Activated naive CD4-positive, alpha-beta T cell treated with anti-CD3 and anti-CD28 coated beads for 36 hours (primary cell): ENCODE measurements at regions of chr1 and their contacts with region 1.

Region 1: DNA sequence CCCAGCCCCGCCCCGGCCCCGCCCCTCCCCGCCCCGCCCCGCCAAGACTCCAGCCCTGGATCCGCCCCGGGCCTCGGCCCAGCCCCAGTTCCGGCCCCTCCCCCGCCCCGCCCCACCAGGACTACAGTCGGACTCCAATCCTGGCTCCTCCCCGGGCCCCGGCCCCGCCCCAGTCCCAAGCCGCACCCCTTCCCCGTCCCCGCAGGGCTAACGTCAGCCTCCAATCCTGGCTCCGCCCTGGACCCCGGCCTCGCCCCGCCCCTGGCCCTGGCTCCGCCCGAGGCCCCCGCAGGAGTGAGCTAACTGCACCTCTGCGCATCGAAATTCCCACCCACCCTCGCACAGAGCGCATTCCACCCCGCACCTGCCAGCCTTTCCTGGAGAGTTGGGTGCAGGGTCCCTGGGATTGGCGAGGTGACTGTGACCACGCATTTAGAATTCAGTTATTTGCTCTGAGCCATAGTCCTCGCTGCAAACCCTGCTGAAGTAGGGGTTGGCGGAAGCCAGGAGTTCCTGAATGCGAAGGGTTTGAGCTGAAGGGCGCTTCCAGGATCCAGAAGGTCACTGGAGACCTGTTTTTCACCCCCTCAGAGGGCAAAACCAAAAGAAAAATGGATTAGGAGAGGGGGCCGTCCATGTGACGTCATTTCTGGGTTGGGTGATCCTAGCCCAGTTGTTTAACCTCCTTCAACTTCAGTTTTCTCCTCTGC is 588 bp upstream of the IGSF8 start:
- DNase-seq: peak; percentile 99
- H3K4me3 Mint-ChIP-seq: peak overlapping the region; percentile 75
- H3K27ac Mint-ChIP-seq: peak overlapping the region; percentile 81
- H3K4me1 Mint-ChIP-seq: peaks cover 50% of the 10 kb centered on the region
- H3K27me3 Mint-ChIP-seq: no peaks in the 10 kb centered on the region

Region 2: DNA sequence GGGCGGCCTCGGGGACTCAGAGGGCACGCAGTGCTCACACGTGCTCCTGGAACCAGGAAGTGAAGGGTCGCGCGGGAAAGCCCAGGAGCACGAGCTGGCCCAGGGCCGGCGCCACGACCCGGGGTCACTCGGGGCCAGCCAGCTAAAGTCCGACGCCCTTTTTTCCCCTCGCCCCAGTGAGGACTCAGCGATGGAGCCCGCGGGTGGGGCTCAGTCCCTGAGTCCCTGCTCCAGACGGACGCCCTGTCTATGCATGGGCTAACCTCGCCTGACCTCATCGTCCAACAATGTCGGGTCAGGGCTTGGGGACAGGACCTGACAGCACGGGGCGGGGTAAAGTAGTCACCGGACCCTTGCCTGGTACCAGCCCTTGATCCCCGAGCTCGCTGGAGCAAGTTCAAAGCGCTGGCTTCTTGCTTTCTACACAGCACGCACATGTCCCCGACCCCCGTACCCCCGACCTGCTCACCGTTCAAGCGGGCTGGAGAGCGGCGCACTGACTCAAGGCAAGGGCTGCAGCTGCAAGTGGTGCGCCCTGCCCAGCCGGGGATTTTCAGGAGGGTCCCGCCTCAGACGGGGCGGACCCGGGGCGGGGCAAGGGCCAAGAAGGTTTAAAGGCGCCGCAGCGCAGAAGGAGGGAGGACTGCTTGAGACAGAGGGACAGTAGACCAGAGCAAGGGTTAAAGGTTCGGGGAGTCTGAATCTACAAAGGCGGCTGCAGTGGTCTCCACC is 173.9 kb before region 1 on chr1 and contains the start of gene TAGLN2:
- CTCF ChIA-PET with region 1: no interaction called
- intact Hi-C with region 1: loop called (anchors 1 kb)
- DNase-seq: peak; percentile 89
- H3K4me3 Mint-ChIP-seq: peak within 1 kb of the TSS; percentile 91
- H3K27ac Mint-ChIP-seq: peak within 1 kb of the TSS; percentile 93
- H3K4me1 Mint-ChIP-seq: peaks cover 42% of the 10 kb centered on the region
- H3K27me3 Mint-ChIP-seq: no peaks in the 10 kb centered on the region
- total RNA-seq, gene TAGLN2: 453 to 454 TPM

Region 3: DNA sequence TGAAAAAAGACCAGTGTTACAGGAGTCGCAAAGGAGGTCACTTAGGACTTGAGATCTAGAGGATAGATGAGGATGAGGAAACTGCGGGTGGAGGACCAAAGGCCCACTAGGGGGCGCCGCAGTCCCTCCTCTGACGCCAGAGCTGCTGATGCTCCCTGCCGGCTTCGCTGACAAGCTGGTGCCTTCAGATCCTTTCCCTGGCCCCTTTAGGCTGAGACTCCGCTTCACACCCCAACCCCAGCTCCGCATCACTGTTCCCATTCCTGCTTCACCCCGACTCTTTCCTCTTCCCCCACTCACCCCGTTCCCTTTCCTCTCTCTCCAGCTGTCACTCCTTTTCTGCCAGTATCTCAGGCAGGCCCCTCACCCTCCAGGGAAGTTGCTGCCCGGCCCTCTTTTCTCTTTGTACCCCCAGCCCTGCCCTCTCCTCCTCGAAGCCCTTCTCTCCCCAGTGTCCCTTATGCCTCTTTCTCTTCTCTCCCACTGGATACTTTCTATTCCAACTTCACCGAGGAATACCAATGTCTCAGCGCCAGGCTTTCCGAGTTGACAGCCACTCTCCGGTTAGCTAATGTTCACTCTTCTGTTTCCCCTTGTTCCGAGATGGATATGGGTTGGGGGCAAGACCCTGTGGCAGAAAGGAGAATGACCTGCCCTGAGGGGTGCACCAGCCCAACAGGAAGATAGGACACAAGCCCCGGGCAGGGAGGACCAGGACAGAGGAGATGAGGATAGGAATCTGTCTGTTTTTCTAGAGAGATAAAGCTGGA is 13.1 kb before region 1 on chr1:
- CTCF ChIA-PET with region 1: interaction called, 88 read pairs
- intact Hi-C with region 1: loop called (anchors 1 kb)
- DNase-seq: peak; percentile 88
- H3K4me3 Mint-ChIP-seq: no peak overlapping the region
- H3K27ac Mint-ChIP-seq: no peak overlapping the region
- H3K4me1 Mint-ChIP-seq: peaks cover 5% of the 10 kb centered on the region
- H3K27me3 Mint-ChIP-seq: peaks cover 17% of the 10 kb centered on the region

Region 4: GRCh38 chr1:160205242-160206035 is 106.4 kb after region 1 on chr1 and contains the start of gene PEA15:
- CTCF ChIA-PET with region 1: interaction called, 17 read pairs
- intact Hi-C with region 1: loop called (anchors 1 kb)
- DNase-seq: peak; percentile 79
- H3K4me3 Mint-ChIP-seq: peak within 1 kb of the TSS; percentile 85
- H3K27ac Mint-ChIP-seq: peak within 1 kb of the TSS; percentile 87
- H3K4me1 Mint-ChIP-seq: peaks cover 46% of the 10 kb centered on the region
- H3K27me3 Mint-ChIP-seq: no peaks in the 10 kb centered on the region
- total RNA-seq, gene PEA15: 34.3 to 42.0 TPM

Region 5: DNA sequence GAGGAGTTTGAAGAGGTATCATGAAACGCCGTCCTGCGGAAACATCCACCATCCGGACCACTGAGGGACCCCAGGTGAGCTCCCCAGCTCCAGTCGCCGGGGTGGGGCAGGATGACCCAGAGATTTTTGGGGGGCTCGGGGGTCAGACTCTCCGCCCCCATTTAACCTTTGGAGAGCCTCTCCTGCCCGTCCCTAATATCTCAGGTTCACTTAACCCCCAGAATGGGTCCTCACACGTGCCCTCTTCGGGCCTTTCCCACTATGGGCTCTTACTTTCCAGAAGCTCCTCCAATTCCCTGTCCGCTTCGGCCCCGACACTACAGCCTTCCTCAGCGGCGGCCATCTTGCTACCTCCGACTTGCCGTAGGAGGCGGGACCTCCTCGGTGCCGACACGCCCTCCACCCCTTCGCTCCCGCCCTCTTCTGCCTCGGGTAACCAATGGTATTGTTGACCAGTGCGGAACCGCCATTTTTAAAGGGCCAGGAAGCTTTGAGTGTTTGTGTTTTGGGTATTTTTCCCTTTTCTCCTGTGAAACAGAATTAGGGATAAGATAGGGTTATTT is 185.9 kb after region 1 on chr1 and contains the start of gene PEX19:
- CTCF ChIA-PET with region 1: interaction called, 87 read pairs
- intact Hi-C with region 1: loop called (anchors 1 kb)
- DNase-seq: peak; percentile 97
- H3K4me3 Mint-ChIP-seq: peak within 1 kb of the TSS; percentile 98
- H3K27ac Mint-ChIP-seq: peak within 1 kb of the TSS; percentile 87
- H3K4me1 Mint-ChIP-seq: peaks cover 18% of the 10 kb centered on the region
- H3K27me3 Mint-ChIP-seq: no peaks in the 10 kb centered on the region
- total RNA-seq, gene PEX19: 58.3 to 65.4 TPM

Region 6: DNA sequence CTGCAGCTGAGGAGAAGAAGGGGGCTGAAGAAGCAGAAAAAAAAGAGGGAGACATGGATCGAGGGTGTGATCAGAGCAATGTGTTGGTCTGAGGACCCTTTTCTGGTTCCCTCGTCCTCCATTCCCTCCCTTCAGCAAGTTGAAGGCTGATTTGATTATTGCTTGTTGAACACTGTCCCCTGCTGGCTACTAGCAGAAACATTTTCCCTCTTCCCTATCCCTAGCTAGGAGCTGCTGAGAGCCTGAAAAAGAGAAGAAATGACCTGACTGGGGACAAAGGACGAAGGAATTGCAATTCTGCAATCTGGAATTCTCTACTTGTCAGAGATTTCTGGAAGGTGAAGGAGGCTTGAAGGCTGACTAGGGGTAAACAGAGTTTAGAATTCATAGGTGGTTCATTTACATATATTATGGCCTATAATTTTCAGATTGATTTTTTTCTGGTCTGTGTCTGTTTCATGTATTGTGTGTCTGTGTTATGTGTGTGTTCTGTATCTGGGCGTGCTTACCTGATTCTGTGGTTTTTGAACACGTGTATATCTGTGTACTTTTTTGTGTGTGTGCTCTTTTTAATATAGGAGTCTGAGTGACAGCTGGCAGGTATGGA is 277.6 kb after region 1 on chr1:
- CTCF ChIA-PET with region 1: interaction called, 22 read pairs
- intact Hi-C with region 1: loop called (anchors 1 kb)
- DNase-seq: peak; percentile 55
- H3K4me3 Mint-ChIP-seq: no peak overlapping the region
- H3K27ac Mint-ChIP-seq: no peak overlapping the region
- H3K4me1 Mint-ChIP-seq: peaks cover 13% of the 10 kb centered on the region
- H3K27me3 Mint-ChIP-seq: no peaks in the 10 kb centered on the region